ENCODE measurements at regions of chr10 and their contacts with region 1.

Region 1: DNA sequence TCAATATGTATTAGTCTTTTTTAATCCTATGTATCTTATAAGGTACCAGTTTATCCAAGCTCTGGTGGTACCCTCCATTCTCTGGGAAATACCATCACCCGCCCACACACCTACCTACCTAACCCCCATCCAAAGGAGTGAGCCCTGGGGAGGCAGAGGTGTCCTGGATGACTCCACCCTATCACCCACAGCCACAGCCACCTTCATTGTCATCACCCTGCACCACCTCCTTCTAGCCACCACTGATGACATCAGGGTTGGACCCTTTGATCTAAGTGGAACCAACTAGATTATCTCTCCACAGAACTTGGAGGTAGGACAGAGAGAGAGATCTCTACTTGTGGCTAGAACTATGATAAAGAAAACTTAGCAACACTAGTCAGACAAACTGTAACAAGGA is 259.4 kb downstream of the PARD3 start:
- DNase-seq: no peak
- ATAC-seq: no peak
- H3K4me3 ChIP-seq: no peak overlapping the region
- H3K27ac ChIP-seq: no peak overlapping the region
- H3K4me1 ChIP-seq: peaks cover 4% of the 10 kb centered on the region; the same call in 1 of the 2 replicates
- H3K27me3 ChIP-seq: no peaks in the 10 kb centered on the region
- CTCF ChIP-seq: no peak
- POLR2A ChIP-seq: no peak
- RAD21 ChIP-seq: no peak

Region 2: GRCh38 chr10:34392641-34393170 is 162.9 kb before region 1 on chr10:
- CTCF ChIA-PET with region 1: no interaction called
- POLR2A ChIA-PET with region 1: interaction called, 15 read pairs
- dilution Hi-C with region 1: no loop called
- in situ Hi-C with region 1: no loop called
- intact Hi-C with region 1: no loop called
- DNase-seq: peak; percentile 19
- ATAC-seq: no peak
- H3K4me3 ChIP-seq: no peak overlapping the region
- H3K27ac ChIP-seq: no peak overlapping the region
- H3K4me1 ChIP-seq: peaks cover 2% of the 10 kb centered on the region
- H3K27me3 ChIP-seq: no peaks in the 10 kb centered on the region
- CTCF ChIP-seq: no peak
- POLR2A ChIP-seq: no peak
- RAD21 ChIP-seq: no peak

Region 3: DNA sequence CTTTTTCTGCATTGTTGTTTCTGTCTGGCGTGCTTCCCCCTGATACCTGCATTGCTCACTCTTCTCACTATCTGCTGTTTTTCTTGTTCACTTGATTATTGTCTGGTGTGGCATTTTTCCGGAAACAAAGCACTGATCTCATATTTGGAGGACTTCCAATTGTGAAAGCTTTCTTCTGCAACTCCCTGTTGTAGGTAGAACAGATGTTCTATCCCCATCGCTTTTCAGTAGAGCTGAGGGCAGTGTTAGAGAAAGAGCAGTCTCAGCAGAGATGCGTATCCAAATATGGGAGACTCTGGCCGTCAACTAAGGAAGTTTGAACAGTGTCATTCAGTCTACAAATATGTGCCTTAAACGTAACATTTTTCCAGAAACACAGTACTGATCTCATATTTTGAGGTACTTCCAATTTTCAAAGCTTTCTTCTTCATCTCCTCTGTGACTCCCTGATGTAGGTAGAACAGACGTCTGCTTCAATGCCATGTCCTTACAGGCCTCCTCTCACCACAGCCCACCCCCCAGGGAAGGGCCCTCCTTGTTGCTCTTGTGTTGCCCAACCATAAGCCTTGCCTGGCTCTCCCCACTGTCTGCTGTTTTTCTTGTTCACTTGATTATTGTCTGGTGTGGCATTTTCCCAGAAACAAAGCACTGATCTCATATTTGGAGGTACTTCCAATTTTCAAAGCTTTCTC is 1022.4 kb after region 1 on chr10:
- CTCF ChIA-PET with region 1: no interaction called
- POLR2A ChIA-PET with region 1: no interaction called
- dilution Hi-C with region 1: no loop called
- in situ Hi-C with region 1: no loop called
- intact Hi-C with region 1: no loop called
- DNase-seq: no peak
- ATAC-seq: no peak
- H3K4me3 ChIP-seq: no peak overlapping the region
- H3K27ac ChIP-seq: no peak overlapping the region
- H3K4me1 ChIP-seq: peaks cover 9% of the 10 kb centered on the region
- H3K27me3 ChIP-seq: peaks cover 9% of the 10 kb centered on the region
- CTCF ChIP-seq: no peak
- POLR2A ChIP-seq: no peak
- RAD21 ChIP-seq: no peak